ENCODE measurements at regions of chr6 and their contacts with region 1.

Region 1: DNA sequence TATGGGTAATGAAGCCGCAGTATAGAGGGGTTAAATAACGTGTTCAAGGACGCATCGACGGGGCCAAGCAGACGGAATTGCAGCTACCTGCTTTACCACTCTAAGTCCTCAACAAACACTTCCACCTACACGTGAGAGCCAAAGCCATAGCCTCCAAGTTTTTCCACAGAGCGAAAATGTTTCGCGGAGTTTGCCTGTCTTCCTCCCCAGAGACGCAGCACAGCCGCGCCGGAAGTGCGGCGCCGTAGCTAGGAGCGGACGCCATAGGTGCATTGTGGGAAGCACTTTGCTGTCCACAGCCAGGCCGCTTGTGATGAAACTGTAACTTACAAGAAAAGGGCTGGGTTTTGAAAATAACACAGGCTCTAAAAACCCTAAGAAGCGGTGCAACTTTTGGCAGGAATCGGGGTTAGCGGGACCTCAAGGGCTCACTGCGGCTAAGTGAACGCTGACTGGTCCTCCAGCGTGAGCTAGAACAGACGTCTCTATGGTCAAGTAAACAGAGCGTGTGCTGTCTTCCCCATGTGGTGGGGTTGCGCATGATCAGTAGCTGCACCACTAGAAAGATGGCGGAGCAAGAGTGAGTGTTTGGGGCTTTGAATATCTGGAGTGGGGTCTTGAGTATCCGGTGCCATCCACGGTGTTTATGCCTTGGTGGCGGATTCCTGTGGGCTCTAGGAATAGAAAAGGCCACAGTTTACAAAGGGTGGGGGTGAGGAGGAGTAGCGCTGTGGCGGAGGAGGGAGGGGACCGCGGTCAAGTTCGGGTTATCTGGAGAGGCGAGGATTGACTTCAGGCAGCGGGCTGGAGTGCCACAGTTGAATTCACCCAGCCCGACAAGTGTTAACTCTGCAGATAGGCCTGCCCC is at the start of gene RPL7L1:
- DNase-seq: peak; percentile 89
- H3K4me3 Mint-ChIP-seq: peak within 1 kb of the TSS; percentile 97
- H3K27ac Mint-ChIP-seq: peak within 1 kb of the TSS; percentile 96
- H3K4me1 Mint-ChIP-seq: peaks cover 17% of the 10 kb centered on the region
- H3K27me3 Mint-ChIP-seq: no peaks in the 10 kb centered on the region
- total RNA-seq, gene RPL7L1: 111 to 117 TPM

Region 2: DNA sequence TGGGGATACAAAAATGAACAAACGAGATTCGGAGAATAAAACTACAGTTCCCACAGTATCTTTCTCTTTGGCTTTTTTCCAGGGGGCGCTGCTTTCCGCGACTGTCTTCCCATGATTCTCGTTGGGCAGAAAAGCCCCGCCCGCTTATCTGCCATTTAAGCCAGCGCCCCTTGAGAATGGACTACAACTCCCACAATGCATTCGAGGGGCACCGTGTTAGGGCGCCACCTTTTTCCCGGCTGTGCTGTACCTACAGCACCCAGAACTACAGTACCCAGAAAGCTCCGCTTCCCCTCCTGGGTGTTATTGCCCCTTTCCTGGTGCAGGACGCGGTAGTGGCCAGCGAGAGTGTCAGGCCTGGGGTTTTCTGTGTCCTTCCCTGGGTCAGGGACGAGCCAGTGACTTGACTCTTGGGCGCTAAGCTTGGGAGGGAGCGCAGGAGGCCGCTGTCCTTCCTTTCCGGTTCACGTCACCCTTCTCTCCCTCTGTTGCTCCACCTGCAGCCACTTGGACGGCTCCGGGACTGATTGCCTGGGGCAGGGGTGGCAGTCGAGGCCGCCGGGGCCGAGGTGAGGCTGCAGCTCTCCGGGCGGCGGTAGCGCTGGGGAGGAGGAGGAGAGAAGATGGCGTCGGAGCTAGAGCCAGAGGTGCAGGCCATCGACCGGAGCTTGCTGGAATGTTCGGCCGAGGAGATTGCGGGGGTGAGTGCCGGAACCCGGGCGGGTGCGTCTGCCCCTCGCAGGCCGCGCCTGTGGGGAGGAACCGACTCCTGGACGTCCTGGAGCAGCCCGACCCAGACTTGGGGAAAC is 315.7 kb before region 1 on chr6 and contains the start of gene UBR2:
- CTCF ChIA-PET with region 1: no interaction called
- POLR2A ChIA-PET with region 1: interaction called, 3 read pairs
- intact Hi-C with region 1: loop called (anchors 1 kb)
- DNase-seq: peak; percentile 96
- H3K4me3 Mint-ChIP-seq: peak within 1 kb of the TSS; percentile 83
- H3K27ac Mint-ChIP-seq: peak within 1 kb of the TSS; percentile 91
- H3K4me1 Mint-ChIP-seq: peaks cover 25% of the 10 kb centered on the region
- H3K27me3 Mint-ChIP-seq: no peaks in the 10 kb centered on the region
- total RNA-seq, gene UBR2: 31.4 to 32.5 TPM

Region 3: GRCh38 chr6:42661540-42662153 is 218.0 kb before region 1 on chr6:
- CTCF ChIA-PET with region 1: interaction called, 14 read pairs
- POLR2A ChIA-PET with region 1: interaction called, 3 read pairs
- intact Hi-C with region 1: loop called (anchors 1 kb)
- DNase-seq: peak; percentile 88
- H3K4me3 Mint-ChIP-seq: no peak overlapping the region
- H3K27ac Mint-ChIP-seq: no peak overlapping the region
- H3K4me1 Mint-ChIP-seq: no peaks in the 10 kb centered on the region
- H3K27me3 Mint-ChIP-seq: no peaks in the 10 kb centered on the region

Region 4: GRCh38 chr6:42771741-42772100 is 107.9 kb before region 1 on chr6:
- CTCF ChIA-PET with region 1: no interaction called
- POLR2A ChIA-PET with region 1: interaction called, 3 read pairs
- intact Hi-C with region 1: loop called (anchors 1 kb)
- DNase-seq: no peak
- H3K4me3 Mint-ChIP-seq: peak overlapping the region; percentile 74
- H3K27ac Mint-ChIP-seq: peak overlapping the region; percentile 98
- H3K4me1 Mint-ChIP-seq: peaks cover 56% of the 10 kb centered on the region
- H3K27me3 Mint-ChIP-seq: no peaks in the 10 kb centered on the region

Region 5: DNA sequence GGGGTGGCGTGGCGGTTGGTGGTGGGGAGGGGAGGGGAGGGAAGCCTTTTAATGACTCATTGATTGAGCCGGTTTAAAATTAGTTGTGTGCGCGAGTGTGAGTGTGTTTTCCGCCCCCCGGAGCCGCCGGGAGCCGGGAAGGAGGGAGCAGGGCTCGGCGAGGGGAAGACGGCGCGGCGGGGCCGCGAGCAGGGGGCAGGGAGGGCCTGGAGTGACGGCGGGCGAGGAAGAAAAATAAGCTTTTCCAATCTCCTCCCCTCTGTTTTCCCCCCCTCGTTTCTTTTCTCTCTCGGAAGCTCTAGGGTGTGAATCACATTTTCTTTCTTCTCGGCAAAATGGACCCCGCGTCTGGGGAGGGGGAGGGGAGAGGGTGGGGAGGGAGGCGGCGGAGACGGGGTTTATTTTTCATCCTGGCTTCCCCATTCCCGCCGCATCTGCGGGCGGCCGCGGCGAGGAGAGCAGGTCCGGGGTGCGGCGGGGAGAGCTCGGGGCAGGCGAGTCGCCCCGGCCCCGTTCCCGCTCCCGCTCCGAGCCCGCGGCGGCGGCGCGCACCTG is 96.9 kb before region 1 on chr6:
- CTCF ChIA-PET with region 1: no interaction called
- POLR2A ChIA-PET with region 1: interaction called, 17 read pairs
- intact Hi-C with region 1: no loop called
- DNase-seq: peak; percentile 80
- H3K4me3 Mint-ChIP-seq: peak overlapping the region; percentile 81
- H3K27ac Mint-ChIP-seq: peak overlapping the region; percentile 95
- H3K4me1 Mint-ChIP-seq: peaks cover 26% of the 10 kb centered on the region
- H3K27me3 Mint-ChIP-seq: no peaks in the 10 kb centered on the region

Region 6: DNA sequence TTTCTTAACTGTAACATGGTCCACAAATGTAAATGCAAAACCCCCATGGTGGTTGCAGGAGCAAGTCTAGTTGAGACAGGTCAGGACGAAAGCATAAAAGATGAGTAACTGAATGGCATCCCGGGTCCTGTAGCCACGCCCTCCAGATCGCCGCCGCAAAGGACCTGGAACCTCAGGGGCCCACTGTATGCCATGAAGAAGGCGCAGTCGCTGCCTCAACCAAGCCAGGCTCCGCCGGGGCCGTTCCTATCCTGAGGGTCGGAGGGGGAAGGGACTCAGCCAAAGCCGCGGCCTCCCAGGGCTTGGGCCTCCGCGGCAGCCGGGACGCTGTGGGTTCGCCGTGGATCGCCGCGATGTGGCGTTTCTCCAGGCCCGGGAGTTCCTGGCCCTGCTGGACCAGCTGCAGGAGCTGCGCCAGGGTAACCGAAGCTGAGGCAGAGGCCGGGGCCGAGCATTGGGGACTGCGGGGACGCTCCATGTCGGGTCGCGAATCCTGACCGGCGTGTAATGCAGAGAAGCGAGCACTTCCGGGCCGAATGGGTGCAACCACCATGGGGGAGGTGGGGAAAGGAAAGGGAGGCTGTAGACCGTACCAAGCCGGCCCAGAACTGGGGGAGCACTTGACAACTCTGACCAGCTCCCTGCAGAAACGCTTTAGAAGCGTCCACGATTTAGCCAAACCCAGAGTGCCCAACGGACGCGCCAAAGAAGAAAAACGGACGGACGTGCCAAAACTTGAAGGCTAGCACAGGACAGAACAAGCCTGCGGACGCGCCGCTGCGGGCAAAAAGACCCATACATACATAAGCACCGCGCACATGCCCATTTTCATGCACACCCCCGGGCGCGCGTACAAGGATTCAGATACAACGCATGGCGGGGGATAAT is 10.9 kb after region 1 on chr6:
- CTCF ChIA-PET with region 1: no interaction called
- POLR2A ChIA-PET with region 1: interaction called, 36 read pairs
- intact Hi-C with region 1: loop called (anchors 1 kb)
- DNase-seq: peak; percentile 96
- H3K4me3 Mint-ChIP-seq: peak overlapping the region; percentile 88
- H3K27ac Mint-ChIP-seq: peak overlapping the region; percentile 94
- H3K4me1 Mint-ChIP-seq: peaks cover 25% of the 10 kb centered on the region
- H3K27me3 Mint-ChIP-seq: no peaks in the 10 kb centered on the region

Region 7: DNA sequence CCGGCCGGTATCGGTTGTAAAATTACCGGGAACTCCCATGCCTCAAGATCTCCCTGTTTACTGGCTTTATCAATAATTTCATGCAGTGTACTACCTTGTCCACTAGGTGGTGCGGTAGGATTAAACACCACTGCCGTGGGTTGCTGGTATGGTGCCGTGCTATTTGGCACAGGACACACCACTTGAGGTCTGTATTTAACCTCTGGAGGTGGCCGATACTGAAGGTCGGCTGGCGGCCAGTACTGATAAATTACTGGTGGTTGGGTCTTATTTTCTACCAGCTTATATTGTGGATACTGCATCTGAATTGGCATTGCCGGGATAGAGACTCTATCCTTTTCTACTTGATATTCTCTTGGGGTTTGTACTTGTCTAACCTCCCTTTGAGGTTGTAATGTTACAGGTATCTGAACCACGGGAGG is 21.9 kb after region 1 on chr6:
- CTCF ChIA-PET with region 1: interaction called, 14 read pairs
- POLR2A ChIA-PET with region 1: no interaction called
- intact Hi-C with region 1: no loop called
- DNase-seq: peak; percentile 78
- H3K4me3 Mint-ChIP-seq: no peak overlapping the region
- H3K27ac Mint-ChIP-seq: no peak overlapping the region
- H3K4me1 Mint-ChIP-seq: peaks cover 8% of the 10 kb centered on the region
- H3K27me3 Mint-ChIP-seq: no peaks in the 10 kb centered on the region

Measured in activated CD4-positive, alpha-beta memory T cell treated with anti-CD3 and anti-CD28 coated beads for 36 hours (primary cell).